CD8-positive, alpha-beta memory T cell (primary cell): ENCODE measurements at regions of chr17 and their contacts with region 1.

Region 1: DNA sequence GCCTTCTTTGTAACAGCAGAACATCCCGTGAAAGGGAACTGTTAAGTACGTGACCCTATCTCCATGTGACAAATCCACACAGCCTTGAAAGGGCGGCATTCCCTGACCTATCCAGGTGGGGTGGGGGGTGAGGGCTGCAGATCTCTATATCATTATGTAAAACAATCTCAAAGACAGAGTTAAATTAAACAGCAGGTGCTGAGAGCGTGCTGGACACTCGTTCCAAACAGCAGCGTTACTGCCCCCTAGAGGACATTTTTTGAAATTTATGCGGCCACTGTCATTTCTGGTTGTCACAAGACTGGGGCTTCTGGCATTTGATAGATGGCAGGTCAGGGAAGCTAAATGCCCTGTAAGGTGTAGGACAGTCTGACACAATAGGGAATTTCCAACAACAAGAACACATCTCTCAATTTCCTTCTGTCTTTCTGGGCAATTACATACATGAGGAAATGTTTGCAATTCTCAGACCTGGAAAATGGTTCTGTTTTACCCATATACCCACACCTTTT is 6.7 kb upstream of the SLC25A39 start:
- DNase-seq: peak; percentile 50 to 79 (median 69)
- H3K4me3 ChIP-seq: no peak overlapping the region
- H3K4me3 Mint-ChIP-seq: peak overlapping the region in 1 of 7 donors; percentile 67
- H3K27ac ChIP-seq: no peak overlapping the region
- H3K27ac Mint-ChIP-seq: peak overlapping the region in 3 of 8 donors; percentile 7 to 65 (median 47)
- H3K4me1 ChIP-seq: peaks cover 4% of the 10 kb centered on the region
- H3K4me1 Mint-ChIP-seq: peaks cover 14 to 16% (median 16%) of the 10 kb centered on the region in 3 donors
- H3K27me3 ChIP-seq: no peaks in the 10 kb centered on the region
- H3K27me3 Mint-ChIP-seq: peaks cover 0 to 4% of the 10 kb centered on the region in 2 donors

Region 2: DNA sequence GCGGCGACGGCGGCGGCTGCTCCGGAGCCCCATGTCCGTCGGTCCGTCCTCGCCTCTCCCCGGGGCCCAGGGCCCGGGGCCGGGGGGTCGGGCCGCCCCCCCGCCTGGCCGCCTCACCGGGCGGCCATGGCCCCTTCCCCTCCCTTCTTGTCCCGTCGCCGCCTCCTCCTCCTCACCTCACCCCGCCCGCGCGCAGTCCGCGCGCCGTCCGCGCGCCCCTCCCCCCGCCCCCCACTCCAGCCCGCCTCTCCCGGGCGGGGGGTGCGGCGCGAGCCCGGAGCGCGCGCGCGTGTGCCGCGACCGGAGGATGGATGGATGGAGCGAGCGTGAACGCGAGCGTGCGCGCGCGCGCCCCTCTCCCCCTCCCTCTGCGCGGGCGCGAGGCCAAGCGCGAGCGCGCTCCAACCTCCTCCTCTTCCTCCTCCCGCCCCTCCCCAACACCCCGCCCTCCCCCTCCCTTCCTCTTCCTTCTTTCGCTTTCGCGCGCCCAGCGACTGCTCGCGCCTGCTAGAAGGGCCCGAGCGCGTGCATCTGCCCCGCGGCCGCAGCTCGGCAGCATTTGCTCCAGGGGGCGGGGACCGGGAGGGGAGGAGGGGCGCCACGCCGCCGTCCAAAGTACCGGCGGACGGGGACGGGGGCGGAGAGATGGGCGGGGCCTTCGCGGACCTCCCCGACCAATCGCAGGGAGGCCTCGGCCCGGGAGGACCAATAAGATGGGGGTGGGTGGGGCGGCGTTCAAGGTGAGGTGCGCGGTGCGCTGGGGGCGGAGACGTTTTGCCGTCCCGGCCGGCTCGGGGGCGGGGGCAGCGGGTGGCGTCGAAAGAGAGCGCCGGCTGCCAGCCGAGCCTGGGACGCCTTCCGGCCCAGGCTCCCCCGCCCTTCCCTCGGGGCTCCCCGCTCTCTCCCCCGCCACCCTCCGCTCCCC is 131.5 kb before region 1 on chr17 and contains the start of gene ATXN7L3:
- CTCF ChIA-PET with region 1: interaction called, 10 read pairs
- POLR2A ChIA-PET with region 1: interaction called, 7 read pairs
- DNase-seq: peak; percentile 96 to 100 (median 99)
- H3K4me3 ChIP-seq: peak within 1 kb of the TSS; percentile 84
- H3K4me3 Mint-ChIP-seq: peak within 1 kb of the TSS; percentile 87 to 96 (median 91)
- H3K27ac ChIP-seq: peak within 1 kb of the TSS; percentile 76
- H3K27ac Mint-ChIP-seq: peak within 1 kb of the TSS; percentile 86 to 98 (median 94)
- H3K4me1 ChIP-seq: peaks cover 30% of the 10 kb centered on the region
- H3K4me1 Mint-ChIP-seq: peaks cover 38 to 51% (median 41%) of the 10 kb centered on the region in 3 donors
- H3K27me3 ChIP-seq: no peaks in the 10 kb centered on the region
- H3K27me3 Mint-ChIP-seq: peaks cover 0 to 1% of the 10 kb centered on the region in 2 donors
- total RNA-seq, gene ATXN7L3: 96.6 to 111 TPM

Region 3: DNA sequence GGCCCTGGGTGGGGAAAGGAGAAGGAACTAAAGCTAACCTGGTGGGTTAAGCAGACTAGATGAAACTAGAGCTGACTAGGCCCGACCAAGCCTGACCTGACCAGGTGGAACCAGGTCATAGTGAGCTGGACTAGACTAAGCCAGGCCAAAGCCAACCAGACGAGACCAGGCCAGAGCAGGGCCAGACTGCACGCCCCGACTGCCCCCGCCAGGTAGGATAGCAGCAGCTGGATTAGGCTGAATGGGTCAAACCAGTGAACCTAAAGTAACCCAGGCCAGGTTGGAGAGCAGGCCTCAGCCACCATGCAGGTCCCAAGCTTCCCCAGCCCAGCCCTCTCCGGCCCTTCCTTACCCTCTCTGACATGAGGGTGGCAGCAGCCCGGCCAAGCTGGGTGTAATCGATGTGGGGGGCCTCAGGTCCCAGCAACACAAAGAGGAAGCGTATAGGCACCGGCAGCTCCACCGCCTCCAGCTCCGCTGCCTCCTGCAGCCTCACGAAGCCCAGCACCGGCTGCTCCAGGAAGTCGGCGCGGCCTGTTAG is 72.4 kb before region 1 on chr17:
- CTCF ChIA-PET with region 1: no interaction called
- POLR2A ChIA-PET with region 1: no interaction called
- DNase-seq: no peak
- H3K4me3 ChIP-seq: no peak overlapping the region
- H3K4me3 Mint-ChIP-seq: no peak overlapping the region
- H3K27ac ChIP-seq: no peak overlapping the region
- H3K27ac Mint-ChIP-seq: peak overlapping the region in 1 of 8 donors; percentile 68
- H3K4me1 ChIP-seq: no peaks in the 10 kb centered on the region
- H3K4me1 Mint-ChIP-seq: no peaks in the 10 kb centered on the region
- H3K27me3 ChIP-seq: no peaks in the 10 kb centered on the region
- H3K27me3 Mint-ChIP-seq: no peaks in the 10 kb centered on the region

Region 4: DNA sequence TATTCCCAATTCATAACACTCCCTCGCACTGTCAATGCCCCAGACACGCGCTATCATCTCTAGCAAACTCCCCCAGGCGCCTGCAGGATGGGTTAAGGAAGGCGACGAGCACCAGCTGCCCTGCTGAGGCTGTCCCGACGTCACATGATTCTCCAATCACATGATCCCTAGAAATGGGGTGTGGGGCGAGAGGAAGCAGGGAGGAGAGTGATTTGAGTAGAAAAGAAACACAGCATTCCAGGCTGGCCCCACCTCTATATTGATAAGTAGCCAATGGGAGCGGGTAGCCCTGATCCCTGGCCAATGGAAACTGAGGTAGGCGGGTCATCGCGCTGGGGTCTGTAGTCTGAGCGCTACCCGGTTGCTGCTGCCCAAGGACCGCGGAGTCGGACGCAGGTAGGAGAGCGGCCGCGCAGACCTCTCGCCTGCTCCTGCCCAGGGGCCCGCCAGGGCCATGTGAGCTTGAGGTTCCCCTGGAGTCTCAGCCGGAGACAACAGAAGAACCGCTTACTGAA is 13.7 kb after region 1 on chr17 and contains the start of gene GRN:
- CTCF ChIA-PET with region 1: interaction called, 28 read pairs
- POLR2A ChIA-PET with region 1: interaction called, 3 read pairs
- DNase-seq: peak; percentile 72 to 87 (median 80)
- H3K4me3 ChIP-seq: peak within 1 kb of the TSS; percentile 89
- H3K4me3 Mint-ChIP-seq: peak within 1 kb of the TSS; percentile 91 to 96 (median 93)
- H3K27ac ChIP-seq: peak within 1 kb of the TSS; percentile 47
- H3K27ac Mint-ChIP-seq: peak within 1 kb of the TSS; percentile 13 to 90 (median 72)
- H3K4me1 ChIP-seq: peaks cover 10% of the 10 kb centered on the region
- H3K4me1 Mint-ChIP-seq: peaks cover 20 to 28% (median 21%) of the 10 kb centered on the region in 3 donors
- H3K27me3 ChIP-seq: no peaks in the 10 kb centered on the region
- H3K27me3 Mint-ChIP-seq: peaks cover 8 to 15% of the 10 kb centered on the region in 2 donors
- total RNA-seq, gene GRN: 48.7 to 50.3 TPM

Region 5: GRCh38 chr17:44878627-44879221 is 547.4 kb after region 1 on chr17:
- CTCF ChIA-PET with region 1: no interaction called
- POLR2A ChIA-PET with region 1: no interaction called
- DNase-seq: peak in 1 of 5 donors; percentile 13
- H3K4me3 ChIP-seq: no peak overlapping the region
- H3K4me3 Mint-ChIP-seq: no peak overlapping the region
- H3K27ac ChIP-seq: no peak overlapping the region
- H3K27ac Mint-ChIP-seq: peak overlapping the region in 2 of 8 donors; percentile 2 to 65
- H3K4me1 ChIP-seq: no peaks in the 10 kb centered on the region
- H3K4me1 Mint-ChIP-seq: peaks cover 0 to 4% (median 3%) of the 10 kb centered on the region in 3 donors
- H3K27me3 ChIP-seq: no peaks in the 10 kb centered on the region
- H3K27me3 Mint-ChIP-seq: no peaks in the 10 kb centered on the region